A549 (cell line): ENCODE measurements at regions of chr10 and their contacts with region 1.

Region 1: DNA sequence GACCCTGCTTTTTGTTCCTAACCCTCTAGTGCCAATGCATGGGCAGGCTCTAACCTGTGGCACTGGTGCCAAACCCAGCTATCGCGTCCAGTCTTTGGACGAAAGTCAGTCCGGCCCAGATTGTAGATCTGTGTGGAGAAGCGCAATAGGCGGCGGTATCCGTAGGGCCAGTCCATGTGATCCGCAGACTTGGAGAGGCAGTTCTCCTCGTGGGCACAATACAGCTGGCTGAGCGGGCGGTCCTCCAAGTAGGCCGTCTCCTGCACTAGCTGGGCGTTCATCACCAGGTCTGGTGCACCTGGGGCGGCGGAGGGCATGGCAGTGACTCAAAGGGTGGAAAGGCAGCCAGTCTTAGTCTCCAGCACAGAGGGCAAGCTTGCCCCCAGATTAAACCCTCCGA is 14.5 kb downstream of the LOXL4 start:
- DNase-seq: no peak
- ATAC-seq: no peak
- H3K4me3 ChIP-seq: no peak overlapping the region
- H3K27ac ChIP-seq: no peak overlapping the region
- H3K4me1 ChIP-seq: no peaks in the 10 kb centered on the region
- CTCF ChIP-seq: no peak
- EP300 ChIP-seq: no peak
- POLR2A ChIP-seq: no peak
- RAD21 ChIP-seq: no peak

Region 2: DNA sequence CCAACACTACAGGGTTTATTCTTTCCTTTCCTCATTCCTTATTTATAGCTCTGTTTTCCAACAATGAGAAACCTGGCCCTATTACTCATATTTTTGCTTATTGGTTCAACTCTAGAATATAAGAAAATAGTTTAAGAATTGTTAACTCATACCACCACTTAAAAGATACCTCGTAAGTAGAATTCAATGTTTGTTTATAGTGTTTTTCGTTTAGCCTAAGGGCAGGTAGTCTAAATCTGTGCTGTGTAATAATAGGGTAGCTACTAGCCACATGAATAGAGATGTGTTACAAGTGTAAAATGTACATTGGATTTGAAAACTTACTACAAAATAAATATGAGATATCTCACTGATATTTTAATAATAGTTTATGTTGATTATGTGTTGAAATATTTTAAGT is 93.5 kb before region 1 on chr10:
- CTCF ChIA-PET with region 1: no interaction called
- POLR2A ChIA-PET with region 1: no interaction called
- DNase-seq: no peak
- ATAC-seq: no peak
- H3K4me3 ChIP-seq: no peak overlapping the region
- H3K27ac ChIP-seq: no peak overlapping the region
- H3K4me1 ChIP-seq: no peaks in the 10 kb centered on the region
- CTCF ChIP-seq: no peak
- EP300 ChIP-seq: no peak
- POLR2A ChIP-seq: no peak
- RAD21 ChIP-seq: no peak

Region 3: DNA sequence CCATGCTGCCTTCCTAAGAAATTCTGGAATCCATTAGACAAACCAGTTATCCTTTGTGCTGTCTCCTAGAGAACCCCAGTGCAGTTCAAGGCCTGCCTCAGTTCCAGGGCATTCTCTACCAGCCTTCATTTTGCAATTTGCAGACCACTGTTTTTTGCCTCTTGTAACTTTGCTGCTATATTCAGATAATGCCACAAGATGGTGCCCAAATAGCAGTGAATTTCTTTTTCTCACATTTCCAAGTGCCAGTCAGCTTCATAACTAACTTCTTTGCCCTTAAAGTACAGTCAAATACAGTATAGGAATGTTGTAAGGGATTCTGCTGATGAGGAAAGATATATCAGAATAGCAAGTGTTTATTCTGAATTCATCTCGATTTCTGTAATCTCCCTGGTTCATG is 10.7 kb before region 1 on chr10:
- CTCF ChIA-PET with region 1: interaction called, 22 read pairs
- POLR2A ChIA-PET with region 1: no interaction called
- DNase-seq: peak in 1 of 2 experiments; percentile 19
- ATAC-seq: peak; percentile 34 to 43; a peak in 2 of 6 replicates
- H3K4me3 ChIP-seq: no peak overlapping the region
- H3K27ac ChIP-seq: no peak overlapping the region
- H3K4me1 ChIP-seq: no peaks in the 10 kb centered on the region
- CTCF ChIP-seq: peak; percentile 60
- EP300 ChIP-seq: no peak
- POLR2A ChIP-seq: no peak
- RAD21 ChIP-seq: peak; percentile 67 to 72